ENCODE measurements at regions of chr7 and their contacts with region 1.

Region 1: GRCh38 chr7:150778738-150779301 is 21.3 kb downstream of the TMEM176B start:
- DNase-seq: peak; percentile 86
- H3K4me3 Mint-ChIP-seq: no peak overlapping the region
- H3K27ac Mint-ChIP-seq: no peak overlapping the region
- H3K4me1 Mint-ChIP-seq: no peaks in the 10 kb centered on the region
- H3K27me3 Mint-ChIP-seq: peaks cover 35% of the 10 kb centered on the region
- CTCF ChIP-seq: peak; percentile 88

Region 2: GRCh38 chr7:150876817-150877526 is 98.2 kb after region 1 on chr7:
- CTCF ChIA-PET with region 1: no interaction called
- intact Hi-C with region 1: loop called (anchors 1 kb)
- DNase-seq: peak; percentile 72
- H3K4me3 Mint-ChIP-seq: peak overlapping the region; percentile 48
- H3K27ac Mint-ChIP-seq: peak overlapping the region; percentile 59
- H3K4me1 Mint-ChIP-seq: peaks cover 12% of the 10 kb centered on the region
- H3K27me3 Mint-ChIP-seq: no peaks in the 10 kb centered on the region
- CTCF ChIP-seq: peak; percentile 57

Region 3: DNA sequence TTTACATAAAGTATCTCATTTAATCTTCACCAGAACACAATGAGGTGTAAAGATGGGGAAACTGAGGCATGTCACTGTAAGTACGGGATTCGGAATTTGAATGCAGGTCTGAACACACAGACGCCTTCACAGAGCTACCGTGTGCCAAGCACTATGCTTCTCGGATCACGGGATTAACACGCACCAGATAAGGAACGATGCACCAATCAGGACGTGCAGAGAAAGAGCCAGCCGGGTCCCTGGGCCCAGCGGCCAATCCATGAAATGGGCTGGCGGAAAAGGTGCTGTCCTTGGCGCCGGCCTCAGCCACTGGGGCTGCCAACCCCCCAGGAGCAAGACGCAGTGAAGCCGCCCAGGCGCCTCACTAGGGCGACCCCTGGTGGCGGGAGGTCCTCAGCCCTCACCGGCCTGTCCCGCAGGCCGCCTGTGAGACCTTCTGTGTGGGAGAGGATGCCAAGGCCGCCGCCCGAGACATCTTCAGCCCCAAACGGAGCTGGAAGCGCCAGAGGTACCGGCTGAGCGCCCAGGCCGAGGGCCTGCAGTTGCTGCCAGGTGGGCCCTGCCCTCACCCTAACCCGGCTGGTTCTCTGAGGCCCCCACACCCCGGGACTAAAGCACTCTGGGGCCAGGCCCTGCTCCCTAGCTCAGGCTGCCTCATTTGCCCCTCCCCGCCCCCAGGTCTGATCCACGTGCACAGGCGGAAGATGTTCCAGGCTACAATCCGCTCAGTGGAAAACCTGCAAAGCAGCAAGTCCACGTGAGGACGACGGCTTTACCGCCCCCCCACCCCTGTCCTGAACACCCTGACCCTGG is 229.9 kb after region 1 on chr7:
- CTCF ChIA-PET with region 1: no interaction called
- intact Hi-C with region 1: loop called (anchors 10 kb)
- DNase-seq: peak; percentile 72
- H3K4me3 Mint-ChIP-seq: peak overlapping the region; percentile 30
- H3K27ac Mint-ChIP-seq: no peak overlapping the region
- H3K4me1 Mint-ChIP-seq: peaks cover 13% of the 10 kb centered on the region
- H3K27me3 Mint-ChIP-seq: peaks cover 13% of the 10 kb centered on the region
- CTCF ChIP-seq: peak; percentile 37

Region 4: DNA sequence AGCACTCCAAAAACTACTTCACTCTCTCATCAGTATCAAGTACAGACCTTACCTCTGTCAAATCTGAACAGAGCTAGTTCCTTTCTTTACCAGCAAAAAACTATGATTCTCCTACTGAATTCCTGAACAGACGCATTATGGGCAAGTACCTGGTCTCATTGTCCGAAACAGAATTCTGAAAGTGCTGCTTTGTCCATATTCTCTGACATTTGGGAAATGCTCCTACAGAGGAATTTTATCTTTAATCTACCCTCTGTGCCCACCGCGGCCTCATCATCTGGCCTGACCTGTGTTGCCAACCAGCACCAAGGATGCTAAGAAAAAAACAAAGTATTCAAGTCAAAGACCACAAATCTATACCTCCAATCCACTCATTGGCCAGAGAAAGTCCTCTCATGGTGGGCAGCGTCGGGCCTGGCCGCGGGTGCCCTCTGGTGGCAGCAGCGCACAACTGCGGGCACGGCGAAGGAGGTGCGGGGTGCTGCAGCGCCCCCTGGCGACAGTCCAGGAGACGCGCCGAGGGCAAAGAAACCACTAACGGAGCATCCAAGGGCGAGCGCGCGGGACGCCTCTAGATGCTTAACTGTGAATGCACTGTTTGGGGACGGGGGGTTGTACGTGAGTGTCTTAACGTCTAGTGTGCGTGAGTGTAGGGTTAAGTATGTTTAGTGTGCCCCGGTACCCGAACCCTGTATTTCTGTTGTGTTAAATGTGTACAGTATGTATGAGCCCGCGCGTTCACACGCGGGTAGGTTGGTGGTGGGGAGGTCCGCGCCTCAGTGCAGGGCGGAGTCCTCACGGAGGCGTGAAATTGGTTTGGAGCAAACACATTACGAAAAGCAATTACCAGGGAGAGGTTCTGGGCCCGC is 393.7 kb after region 1 on chr7:
- CTCF ChIA-PET with region 1: no interaction called
- intact Hi-C with region 1: loop called (anchors 2 kb)
- DNase-seq: peak; percentile 79
- H3K4me3 Mint-ChIP-seq: no peak overlapping the region
- H3K27ac Mint-ChIP-seq: no peak overlapping the region
- H3K4me1 Mint-ChIP-seq: peaks cover 11% of the 10 kb centered on the region
- H3K27me3 Mint-ChIP-seq: peaks cover 98% of the 10 kb centered on the region
- CTCF ChIP-seq: peak; percentile 100

Region 5: GRCh38 chr7:151304856-151305255 is 526.0 kb after region 1 on chr7:
- CTCF ChIA-PET with region 1: no interaction called
- intact Hi-C with region 1: loop called (anchors 5 kb)
- DNase-seq: no peak
- H3K4me3 Mint-ChIP-seq: no peak overlapping the region
- H3K27ac Mint-ChIP-seq: no peak overlapping the region
- H3K4me1 Mint-ChIP-seq: no peaks in the 10 kb centered on the region
- H3K27me3 Mint-ChIP-seq: peaks cover 85% of the 10 kb centered on the region
- CTCF ChIP-seq: no peak